ENCODE measurements at regions of chr1 and their contacts with region 1.

Region 1: DNA sequence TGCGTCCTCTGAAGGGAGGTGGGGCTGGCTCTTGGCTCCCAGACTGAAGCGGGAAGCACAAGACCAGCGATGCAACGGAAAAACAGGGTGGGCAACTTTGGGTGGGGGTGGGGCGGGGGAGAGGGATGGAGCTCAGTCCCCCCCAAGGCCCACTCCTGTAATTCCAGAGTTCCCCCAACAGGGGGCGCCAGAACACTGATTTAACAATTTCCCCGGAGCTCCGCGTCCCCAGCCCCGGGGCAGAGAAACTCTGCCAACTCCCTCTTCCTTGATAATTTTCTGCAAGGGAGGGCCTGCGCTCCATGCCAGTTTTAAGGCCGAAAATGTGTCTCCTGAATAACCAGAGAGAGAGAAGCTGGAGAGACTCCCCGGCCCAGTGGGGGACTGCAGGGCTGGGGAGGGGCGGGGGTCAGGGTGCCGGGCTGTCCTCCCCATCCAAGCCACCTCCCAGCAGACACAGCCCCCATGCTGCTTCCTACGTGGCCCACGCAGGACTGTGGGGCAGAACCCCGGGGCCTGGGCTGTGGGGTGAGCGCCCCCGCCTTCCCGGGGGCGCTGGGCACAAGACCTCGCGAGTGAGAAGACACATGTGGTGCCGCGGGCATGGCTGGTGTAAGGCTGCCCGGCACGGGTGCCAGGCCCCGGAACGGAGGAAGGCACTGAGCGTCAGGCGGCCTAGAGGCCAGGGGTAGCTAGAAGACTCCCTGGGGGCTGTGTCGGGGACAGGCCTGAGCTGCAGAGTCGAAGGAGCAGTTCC is 51.4 kb downstream of the KIF21B start:
- DNase-seq: peak in 1 of 2 donors; percentile 39
- ATAC-seq: peak; percentile 40 to 47
- H3K4me3 ChIP-seq: peak overlapping the region in 1 of 4 donors; percentile 24
- H3K27ac ChIP-seq: no peak overlapping the region
- H3K4me1 ChIP-seq: peaks cover 0 to 5% of the 10 kb centered on the region in 2 donors
- H3K27me3 ChIP-seq: no peaks in the 10 kb centered on the region
- CTCF ChIP-seq: peak; percentile 50 to 91 (median 73)
- POLR2A ChIP-seq: no peak

Region 2: GRCh38 chr1:201042779-201043461 is 70.8 kb after region 1 on chr1:
- in situ Hi-C with region 1: loop called (anchors 5 kb)
- intact Hi-C with region 1: loop called (anchors 1 kb)
- DNase-seq: peak; percentile 38 to 52
- ATAC-seq: peak; percentile 77 to 85
- H3K4me3 ChIP-seq: no peak overlapping the region
- H3K27ac ChIP-seq: peak overlapping the region; percentile 11 to 44 (median 33)
- H3K4me1 ChIP-seq: peaks cover 0 to 6% of the 10 kb centered on the region in 2 donors
- H3K27me3 ChIP-seq: no peaks in the 10 kb centered on the region
- CTCF ChIP-seq: peak; percentile 73 to 86 (median 82)
- POLR2A ChIP-seq: no peak

Region 3: GRCh38 chr1:201114236-201115131 is 142.4 kb after region 1 on chr1:
- in situ Hi-C with region 1: no loop called
- intact Hi-C with region 1: loop called (anchors 1 kb)
- DNase-seq: peak; percentile 85 to 94
- ATAC-seq: peak; percentile 85 to 92
- H3K4me3 ChIP-seq: peak overlapping the region; percentile 59 to 84 (median 67)
- H3K27ac ChIP-seq: peak overlapping the region; percentile 89 to 98 (median 96)
- H3K4me1 ChIP-seq: peaks cover 38 to 47% of the 10 kb centered on the region in 2 donors
- H3K27me3 ChIP-seq: no peaks in the 10 kb centered on the region
- CTCF ChIP-seq: peak; percentile 86 to 97 (median 93)
- POLR2A ChIP-seq: peak; percentile 12 to 58

Region 4: GRCh38 chr1:201206176-201206575 is 234.0 kb after region 1 on chr1:
- in situ Hi-C with region 1: loop called in 1 of 4 experiments (anchors 10 kb)
- intact Hi-C with region 1: no loop called
- DNase-seq: no peak
- ATAC-seq: no peak
- H3K4me3 ChIP-seq: no peak overlapping the region
- H3K27ac ChIP-seq: no peak overlapping the region
- H3K4me1 ChIP-seq: no peaks in the 10 kb centered on the region
- H3K27me3 ChIP-seq: no peaks in the 10 kb centered on the region
- CTCF ChIP-seq: no peak
- POLR2A ChIP-seq: no peak

Region 5: DNA sequence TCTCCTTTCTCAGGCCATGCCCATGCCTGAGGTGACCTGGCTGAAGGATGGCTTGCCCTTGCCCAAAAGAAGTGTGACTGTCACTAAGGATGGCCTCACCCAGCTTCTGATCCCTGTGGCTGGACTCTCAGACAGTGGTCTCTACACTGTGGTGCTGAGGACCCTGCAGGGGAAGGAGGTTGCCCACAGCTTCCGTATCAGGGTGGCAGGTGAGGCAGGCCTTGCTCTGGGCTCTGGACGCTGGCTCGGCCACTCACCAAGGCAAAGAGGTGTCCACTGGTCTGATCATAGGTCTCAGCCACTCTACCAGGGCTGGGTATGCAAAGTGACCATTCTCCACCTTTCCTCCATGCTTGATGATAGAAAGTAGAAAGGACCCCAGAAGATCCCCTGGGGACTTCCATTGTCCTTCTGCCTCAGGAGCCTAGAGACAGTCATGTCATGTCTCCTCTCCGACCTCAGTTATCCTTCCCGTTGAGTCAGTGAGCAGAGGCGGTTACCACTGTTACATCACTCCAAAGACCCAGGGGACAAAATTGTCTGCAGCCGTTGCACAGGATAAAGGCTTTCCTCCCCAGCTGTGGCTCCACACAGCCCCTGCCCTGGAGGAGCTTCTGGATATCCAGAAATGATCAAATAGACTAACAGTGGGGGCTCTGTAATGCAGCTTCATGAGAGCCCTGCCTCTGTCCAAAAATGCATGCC is 252.7 kb after region 1 on chr1:
- in situ Hi-C with region 1: loop called in 1 of 4 experiments (anchors 10 kb)
- intact Hi-C with region 1: loop called (anchors 5 kb)
- DNase-seq: no peak
- ATAC-seq: no peak
- H3K4me3 ChIP-seq: no peak overlapping the region
- H3K27ac ChIP-seq: no peak overlapping the region
- H3K4me1 ChIP-seq: peaks cover 0 to 6% of the 10 kb centered on the region in 2 donors
- H3K27me3 ChIP-seq: no peaks in the 10 kb centered on the region
- CTCF ChIP-seq: no peak
- POLR2A ChIP-seq: no peak

Region 6: GRCh38 chr1:201229771-201230635 is 257.9 kb after region 1 on chr1:
- in situ Hi-C with region 1: loop called in 1 of 4 experiments (anchors 10 kb)
- intact Hi-C with region 1: no loop called
- DNase-seq: no peak
- ATAC-seq: no peak
- H3K4me3 ChIP-seq: no peak overlapping the region
- H3K27ac ChIP-seq: no peak overlapping the region
- H3K4me1 ChIP-seq: no peaks in the 10 kb centered on the region
- H3K27me3 ChIP-seq: no peaks in the 10 kb centered on the region
- CTCF ChIP-seq: no peak
- POLR2A ChIP-seq: no peak